Right ventricle myocardium superior (tissue), 1 donor: ENCODE measurements at regions of chr1 and their contacts with region 1.

Region 1: DNA sequence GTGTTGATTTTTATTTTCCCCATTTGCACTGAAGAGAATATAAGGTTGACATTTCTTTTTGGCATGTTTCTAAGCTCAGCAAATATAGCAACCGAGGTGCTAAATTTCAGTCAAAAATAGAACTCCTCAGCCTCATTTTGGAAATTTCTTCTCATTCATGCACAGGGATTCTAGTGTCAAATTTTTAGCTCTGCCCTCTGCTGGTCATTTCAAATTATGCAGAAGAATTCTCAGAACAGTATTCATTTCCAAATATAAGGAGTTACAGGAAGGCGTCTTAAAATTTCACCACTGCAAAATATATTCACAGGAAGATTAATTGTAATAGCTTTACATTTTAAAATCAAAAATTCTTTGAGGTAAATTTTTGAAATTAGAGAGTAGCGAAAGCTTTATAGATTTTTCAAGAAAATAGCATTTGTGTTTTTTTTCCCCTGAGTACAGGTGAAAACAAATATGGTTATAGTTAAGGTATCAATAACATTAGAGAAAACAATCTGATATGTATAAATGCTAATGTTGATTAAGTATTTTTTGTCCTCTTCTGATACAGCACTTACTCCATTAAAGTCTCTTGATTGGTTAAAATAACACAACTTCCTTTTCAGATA is 57.9 kb downstream of the FMN2 start:
- DNase-seq: no peak
- ATAC-seq: no peak

Region 2: GRCh38 chr1:240027059-240027462 is 122.5 kb before region 1 on chr1:
- intact Hi-C with region 1: loop called (anchors 5 kb)
- DNase-seq: no peak
- ATAC-seq: no peak

Region 3: DNA sequence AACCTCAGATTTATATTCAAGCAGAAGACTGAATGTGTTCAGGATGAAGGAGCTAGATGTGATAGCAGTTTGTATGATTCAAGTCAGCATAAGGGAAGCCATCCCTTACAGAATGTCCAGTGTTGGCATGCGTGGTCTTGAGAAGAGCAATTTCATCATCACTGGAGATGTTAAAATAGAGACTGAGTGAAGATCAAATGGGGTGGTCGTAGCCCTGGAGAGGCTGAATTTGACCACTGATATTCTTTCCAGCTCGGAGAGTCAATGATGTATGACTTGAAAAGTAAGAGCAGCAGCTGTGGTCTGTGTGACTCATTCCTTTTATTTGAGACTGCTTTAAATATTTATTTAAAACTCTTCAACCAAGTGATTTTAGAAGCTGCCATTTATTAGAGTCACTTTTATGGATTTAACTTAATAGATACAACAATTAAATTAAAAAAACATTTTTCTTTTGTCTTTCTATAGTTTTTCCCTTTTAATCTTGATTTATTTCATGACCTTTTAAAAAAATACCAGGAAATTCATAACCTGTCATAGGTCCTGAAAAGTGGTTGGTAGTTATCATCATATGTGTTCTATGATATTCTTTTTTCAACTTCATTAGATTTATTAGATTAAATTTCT is 42.4 kb before region 1 on chr1:
- intact Hi-C with region 1: no loop called
- DNase-seq: no peak
- ATAC-seq: no peak

Region 4: DNA sequence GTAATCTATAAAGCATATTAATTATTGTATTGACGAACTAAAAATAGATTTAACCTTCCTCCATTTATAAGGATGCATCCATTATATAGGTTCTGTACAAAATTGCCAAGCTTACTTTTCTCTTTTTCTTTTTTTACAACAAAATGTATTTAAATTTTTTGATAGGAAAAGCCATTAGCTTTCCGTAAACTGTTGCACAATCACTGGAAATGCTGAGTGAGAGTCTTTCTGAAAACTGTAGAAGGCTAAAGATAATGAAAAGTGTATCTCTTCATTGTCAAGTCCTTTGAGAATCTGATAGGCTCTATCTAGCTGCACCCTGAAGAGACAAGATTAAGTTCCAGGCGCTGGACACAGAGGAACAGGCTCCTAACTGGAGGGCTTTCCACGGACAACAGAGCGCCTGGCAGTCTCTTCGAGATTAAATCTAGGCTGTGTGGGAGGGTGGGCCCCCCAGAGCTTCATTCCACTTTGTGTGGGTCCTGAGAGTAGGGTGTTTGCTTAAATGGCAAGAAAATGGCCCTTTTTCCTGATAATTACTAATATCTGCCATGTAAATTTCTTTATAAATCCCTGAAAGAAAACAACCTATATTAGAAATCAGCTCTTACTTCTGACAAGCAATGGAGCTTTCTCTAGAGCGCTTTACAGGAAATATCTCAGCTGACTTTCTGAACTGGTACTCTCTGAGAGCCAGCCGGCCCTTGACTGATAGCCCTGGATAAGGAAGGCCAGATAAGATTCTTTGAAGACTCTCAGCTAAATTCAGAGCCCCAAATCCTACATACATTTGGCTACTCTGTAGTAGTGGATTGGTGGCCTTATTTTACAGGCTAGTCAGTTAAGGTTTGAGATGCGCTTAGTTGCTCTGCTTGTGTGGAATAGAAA is 50.4 kb after region 1 on chr1:
- intact Hi-C with region 1: no loop called
- DNase-seq: no peak
- ATAC-seq: no peak